Gastrocnemius medialis (tissue), 4 donors: ENCODE measurements at regions of chr19 and their contacts with region 1.

Region 1: GRCh38 chr19:14073261-14073924 is 807 bp downstream of the MISP3 start:
- DNase-seq: peak in 1 of 2 donors; percentile 62
- ATAC-seq: peak; percentile 64 to 77
- H3K4me3 ChIP-seq: peak overlapping the region; percentile 71 to 93 (median 74)
- H3K27ac ChIP-seq: peak overlapping the region; percentile 86 to 97 (median 90)
- H3K4me1 ChIP-seq: peaks cover 20 to 32% of the 10 kb centered on the region in 2 donors
- H3K27me3 ChIP-seq: no peaks in the 10 kb centered on the region
- CTCF ChIP-seq: peak in 4 of 5 experiments; percentile 83 to 96 (median 92)
- POLR2A ChIP-seq: peak; percentile 19 to 60

Region 2: DNA sequence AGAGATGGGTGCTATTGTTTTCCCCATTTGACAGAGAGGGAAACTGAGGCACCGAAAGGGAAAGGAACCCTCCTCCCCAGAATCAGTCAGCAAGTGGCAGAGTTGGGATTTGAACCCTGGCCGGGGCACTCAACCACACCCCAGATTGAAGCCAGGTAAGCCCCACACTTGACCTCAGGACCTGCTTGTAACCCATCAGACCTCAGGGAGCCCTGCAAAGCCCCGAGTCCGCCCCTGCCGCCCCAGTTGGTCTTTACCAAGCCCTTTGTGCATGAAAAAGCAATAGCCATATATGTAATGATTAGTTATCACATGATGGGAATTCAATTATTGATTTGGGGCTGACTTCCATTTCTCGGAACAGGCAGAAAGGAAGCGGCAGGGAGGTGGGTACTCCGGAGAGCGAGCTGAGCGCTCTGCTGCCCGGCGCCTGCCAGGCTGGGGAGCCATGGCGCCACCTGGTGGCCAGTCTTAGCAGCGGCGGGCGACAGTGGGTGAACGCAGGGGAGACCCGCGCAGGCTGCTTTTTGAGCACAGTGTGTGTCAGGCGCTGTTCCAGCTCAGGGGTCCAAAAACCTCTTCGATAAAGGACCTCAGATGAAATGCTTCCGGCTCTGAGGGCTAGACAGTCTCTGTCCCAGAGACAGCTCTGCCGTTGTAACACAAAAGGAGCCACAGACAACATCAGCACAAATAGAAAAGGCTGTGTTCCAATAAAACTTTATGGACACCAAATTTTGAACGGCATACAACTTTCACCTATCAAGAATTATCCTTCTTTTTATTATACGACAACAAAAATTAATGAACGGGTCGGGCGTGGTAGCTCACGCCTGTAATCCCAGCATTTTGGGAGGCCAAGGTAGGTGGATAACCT is 484.2 kb before region 1 on chr19:
- in situ Hi-C with region 1: loop called in 3 of 4 experiments (anchors 25 kb)
- intact Hi-C with region 1: loop called (anchors 10 kb)
- DNase-seq: peak; percentile 3 to 13
- ATAC-seq: no peak
- H3K4me3 ChIP-seq: no peak overlapping the region
- H3K27ac ChIP-seq: no peak overlapping the region
- H3K4me1 ChIP-seq: no peaks in the 10 kb centered on the region
- H3K27me3 ChIP-seq: peaks cover 0 to 7% (median 3%) of the 10 kb centered on the region in 3 donors
- CTCF ChIP-seq: peak; percentile 42 to 87 (median 77)
- POLR2A ChIP-seq: no peak

Region 3: GRCh38 chr19:13621413-13621812 is 452.0 kb before region 1 on chr19:
- in situ Hi-C with region 1: loop called in 1 of 4 experiments (anchors 25 kb)
- intact Hi-C with region 1: no loop called
- DNase-seq: no peak
- ATAC-seq: no peak
- H3K4me3 ChIP-seq: no peak overlapping the region
- H3K27ac ChIP-seq: no peak overlapping the region
- H3K4me1 ChIP-seq: no peaks in the 10 kb centered on the region
- H3K27me3 ChIP-seq: peaks cover 0 to 15% (median 0%) of the 10 kb centered on the region in 3 donors
- CTCF ChIP-seq: no peak
- POLR2A ChIP-seq: no peak

Region 4: DNA sequence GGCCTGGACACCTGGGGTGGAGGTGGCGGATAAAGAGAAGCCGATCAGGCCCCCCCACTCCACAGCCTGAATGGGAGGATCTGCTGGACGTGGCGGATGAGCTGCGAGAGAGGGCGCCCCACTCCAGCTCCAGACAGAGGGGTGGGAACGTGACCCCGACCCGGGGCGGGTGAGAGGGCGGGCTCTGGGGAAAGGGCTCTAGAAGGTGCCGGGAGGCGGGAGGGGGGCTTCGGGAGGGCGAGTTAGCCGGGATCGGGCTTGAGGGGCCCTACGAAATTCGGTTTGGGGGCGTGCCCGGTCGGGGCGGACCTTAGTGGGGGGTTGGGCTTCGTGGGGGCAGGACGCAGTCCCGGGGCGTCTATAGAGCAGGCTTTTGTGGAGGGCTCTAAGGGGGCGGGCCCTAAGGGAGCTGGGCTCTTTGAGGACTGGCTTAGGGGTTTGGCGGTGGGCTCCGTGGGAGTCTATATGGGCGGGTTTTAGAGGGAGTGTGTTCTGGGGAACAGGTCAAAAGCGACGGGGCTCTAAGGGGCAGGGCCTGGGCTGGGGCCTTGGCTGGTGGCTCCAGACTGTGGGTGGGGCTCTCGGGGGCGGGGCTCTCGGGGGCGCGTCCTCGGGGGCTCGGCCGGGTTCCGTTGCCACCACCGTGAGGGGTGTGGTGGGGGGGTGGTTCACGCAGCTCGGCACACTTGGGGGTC is 200.6 kb before region 1 on chr19:
- in situ Hi-C with region 1: loop called in 1 of 4 experiments (anchors 10 kb)
- intact Hi-C with region 1: no loop called
- DNase-seq: no peak
- ATAC-seq: no peak
- H3K4me3 ChIP-seq: peak overlapping the region; percentile 18 to 46 (median 44)
- H3K27ac ChIP-seq: no peak overlapping the region
- H3K4me1 ChIP-seq: no peaks in the 10 kb centered on the region
- H3K27me3 ChIP-seq: peaks cover 0 to 12% (median 11%) of the 10 kb centered on the region in 3 donors
- CTCF ChIP-seq: no peak
- POLR2A ChIP-seq: no peak

Region 5: GRCh38 chr19:13995017-13995728 is 78.2 kb before region 1 on chr19:
- in situ Hi-C with region 1: no loop called
- intact Hi-C with region 1: no loop called
- DNase-seq: peak; percentile 41 to 81
- ATAC-seq: peak; percentile 87 to 92
- H3K4me3 ChIP-seq: no peak overlapping the region
- H3K27ac ChIP-seq: peak overlapping the region; percentile 73 to 86 (median 80)
- H3K4me1 ChIP-seq: peaks cover 6 to 15% of the 10 kb centered on the region in 2 donors
- H3K27me3 ChIP-seq: no peaks in the 10 kb centered on the region
- CTCF ChIP-seq: no peak
- POLR2A ChIP-seq: no peak

Region 6: GRCh38 chr19:14006243-14006765 is 67.1 kb before region 1 on chr19 and contains the start of gene RFX1:
- in situ Hi-C with region 1: no loop called
- intact Hi-C with region 1: loop called (anchors 1 kb)
- DNase-seq: peak; percentile 99 to 100
- ATAC-seq: peak; percentile 82 to 85
- H3K4me3 ChIP-seq: peak within 1 kb of the TSS; percentile 84 to 97 (median 92)
- H3K27ac ChIP-seq: peak within 1 kb of the TSS; percentile 96 to 100 (median 99)
- H3K4me1 ChIP-seq: peaks cover 34 to 45% of the 10 kb centered on the region in 2 donors
- H3K27me3 ChIP-seq: no peaks in the 10 kb centered on the region
- CTCF ChIP-seq: peak in 1 of 5 experiments; percentile 41
- POLR2A ChIP-seq: no peak
- total RNA-seq, gene RFX1: 2.7 to 7.2 (median 4.4) TPM

Region 7: GRCh38 chr19:14136509-14137281 is 63.3 kb after region 1 on chr19 and contains the start of gene ASF1B:
- in situ Hi-C with region 1: loop called in 1 of 4 experiments (anchors 5 kb)
- intact Hi-C with region 1: loop called (anchors 1 kb)
- DNase-seq: peak; percentile 99 to 100
- ATAC-seq: peak; percentile 86 to 94
- H3K4me3 ChIP-seq: peak within 1 kb of the TSS; percentile 65 to 81 (median 76)
- H3K27ac ChIP-seq: peak within 1 kb of the TSS; percentile 91 to 99 (median 98)
- H3K4me1 ChIP-seq: peaks cover 24 to 32% of the 10 kb centered on the region in 2 donors
- H3K27me3 ChIP-seq: no peaks in the 10 kb centered on the region
- CTCF ChIP-seq: peak; percentile 86 to 92 (median 87)
- POLR2A ChIP-seq: peak; percentile 81 to 87
- total RNA-seq, gene ASF1B: 1.2 to 4.1 (median 1.5) TPM in 3 of 4 donors, not detected in the other